Mammary epithelial cell (primary cell): ENCODE measurements at regions of chr10 and their contacts with region 1.

Region 1: GRCh38 chr10:61750929-61751471 is 88.3 kb downstream of the CABCOCO1 start:
- DNase-seq: peak; percentile 59
- H3K4me3 ChIP-seq: no peak overlapping the region
- H3K27ac ChIP-seq: no peak overlapping the region
- H3K4me1 ChIP-seq: peaks cover 29% of the 10 kb centered on the region
- H3K27me3 ChIP-seq: no peaks in the 10 kb centered on the region
- CTCF ChIP-seq: peak; percentile 90 to 95

Region 2: DNA sequence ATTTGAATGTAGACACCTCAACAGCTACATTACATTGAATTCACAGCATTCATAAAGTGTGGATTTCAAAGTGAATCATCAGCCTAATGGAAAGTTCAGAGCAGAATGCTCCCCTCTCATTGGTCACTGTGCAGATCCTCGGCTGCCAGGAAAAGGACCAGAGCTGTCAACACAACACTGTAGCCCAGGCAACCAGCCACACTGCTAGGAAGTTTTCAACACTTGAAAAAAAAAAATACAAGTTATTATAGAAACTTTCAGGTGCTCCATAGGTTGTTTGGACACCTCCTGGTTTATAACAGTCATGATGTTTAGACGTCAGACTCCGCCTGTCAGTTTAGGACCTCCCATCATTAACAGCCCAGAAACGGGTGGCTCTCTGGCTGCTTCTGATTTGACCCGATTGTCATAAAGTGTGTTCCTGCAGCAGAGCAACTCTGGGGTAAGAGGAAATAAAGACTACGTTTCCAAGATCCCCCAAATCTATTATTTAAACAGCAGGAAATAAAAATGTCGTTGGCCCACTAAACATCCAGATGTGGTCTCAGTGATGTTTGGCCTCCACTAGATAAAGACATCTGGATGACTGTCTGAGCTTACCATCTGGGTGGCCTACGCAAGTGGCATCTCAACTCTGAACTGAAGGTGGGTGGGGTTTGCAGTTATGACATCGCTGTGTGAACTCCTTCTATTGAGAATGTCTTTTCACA is 29.1 kb after region 1 on chr10:
- CTCF ChIA-PET with region 1: no interaction called
- dilution Hi-C with region 1: no loop called
- in situ Hi-C with region 1: no loop called
- intact Hi-C with region 1: no loop called
- DNase-seq: peak; percentile 81
- H3K4me3 ChIP-seq: no peak overlapping the region
- H3K27ac ChIP-seq: no peak overlapping the region
- H3K4me1 ChIP-seq: peaks cover 13% of the 10 kb centered on the region
- H3K27me3 ChIP-seq: no peaks in the 10 kb centered on the region
- CTCF ChIP-seq: no peak

Region 3: DNA sequence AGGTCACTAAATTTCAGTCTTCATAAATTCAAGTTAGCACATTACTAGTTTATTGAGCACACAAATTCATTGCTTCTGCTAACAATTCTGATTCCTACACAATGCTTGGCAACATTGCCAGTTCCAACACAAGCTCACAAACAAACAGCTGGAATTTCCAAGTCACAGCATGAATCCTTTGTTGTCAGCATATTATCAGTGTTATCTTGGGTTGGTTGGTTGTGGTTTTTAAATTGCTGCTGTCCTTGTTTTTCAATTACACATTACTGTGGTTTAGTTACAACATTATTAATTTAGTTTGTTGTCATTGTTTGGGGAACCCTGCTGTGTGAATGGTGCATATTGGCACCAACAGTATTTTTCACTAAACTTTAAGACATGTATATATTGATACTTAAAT is 64.5 kb after region 1 on chr10:
- CTCF ChIA-PET with region 1: interaction called, 4 read pairs
- dilution Hi-C with region 1: no loop called
- in situ Hi-C with region 1: no loop called
- intact Hi-C with region 1: loop called (anchors 5 kb)
- DNase-seq: peak; percentile 56
- H3K4me3 ChIP-seq: no peak overlapping the region
- H3K27ac ChIP-seq: no peak overlapping the region
- H3K4me1 ChIP-seq: peaks cover under 1% of the 10 kb centered on the region
- H3K27me3 ChIP-seq: no peaks in the 10 kb centered on the region
- CTCF ChIP-seq: no peak

Region 4: DNA sequence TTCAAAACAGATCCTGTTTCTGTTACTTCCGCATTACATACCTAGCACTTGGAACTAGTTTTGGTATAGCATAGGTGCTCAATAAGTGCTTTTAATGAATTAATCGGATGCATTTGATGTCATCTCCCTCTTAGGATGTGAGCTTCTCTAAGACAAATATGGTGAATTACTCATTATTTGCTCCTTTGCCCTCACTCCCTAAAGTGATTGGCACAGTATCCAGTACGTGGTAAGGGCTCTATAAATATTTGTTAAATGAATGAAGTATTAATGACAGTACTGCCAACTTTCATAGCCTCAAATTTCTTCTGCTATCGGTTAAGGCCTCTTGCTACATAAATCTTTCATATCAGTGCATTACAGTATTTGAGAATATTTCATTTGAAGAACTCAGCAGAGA is 74.6 kb after region 1 on chr10:
- CTCF ChIA-PET with region 1: interaction called, 11 read pairs
- dilution Hi-C with region 1: no loop called
- in situ Hi-C with region 1: no loop called
- intact Hi-C with region 1: no loop called
- DNase-seq: no peak
- H3K4me3 ChIP-seq: no peak overlapping the region
- H3K27ac ChIP-seq: no peak overlapping the region
- H3K4me1 ChIP-seq: peaks cover 14% of the 10 kb centered on the region
- H3K27me3 ChIP-seq: no peaks in the 10 kb centered on the region
- CTCF ChIP-seq: no peak

Region 5: GRCh38 chr10:61835069-61835945 is 84.3 kb after region 1 on chr10:
- CTCF ChIA-PET with region 1: interaction called, 10 read pairs
- dilution Hi-C with region 1: no loop called
- in situ Hi-C with region 1: no loop called
- intact Hi-C with region 1: loop called (anchors 1 kb)
- DNase-seq: peak; percentile 54
- H3K4me3 ChIP-seq: no peak overlapping the region
- H3K27ac ChIP-seq: peak overlapping the region; percentile 63
- H3K4me1 ChIP-seq: peaks cover 21% of the 10 kb centered on the region
- H3K27me3 ChIP-seq: no peaks in the 10 kb centered on the region
- CTCF ChIP-seq: peak; percentile 38 to 67

Region 6: GRCh38 chr10:61896854-61897661 is 146.1 kb after region 1 on chr10:
- CTCF ChIA-PET with region 1: interaction called, 3 read pairs
- dilution Hi-C with region 1: no loop called
- in situ Hi-C with region 1: no loop called
- intact Hi-C with region 1: loop called (anchors 1 kb)
- DNase-seq: no peak
- H3K4me3 ChIP-seq: peak overlapping the region in 1 of 3 experiments; percentile 15
- H3K27ac ChIP-seq: peak overlapping the region; percentile 30
- H3K4me1 ChIP-seq: peaks cover 34% of the 10 kb centered on the region
- H3K27me3 ChIP-seq: no peaks in the 10 kb centered on the region
- CTCF ChIP-seq: peak; percentile 71 to 75

Region 7: DNA sequence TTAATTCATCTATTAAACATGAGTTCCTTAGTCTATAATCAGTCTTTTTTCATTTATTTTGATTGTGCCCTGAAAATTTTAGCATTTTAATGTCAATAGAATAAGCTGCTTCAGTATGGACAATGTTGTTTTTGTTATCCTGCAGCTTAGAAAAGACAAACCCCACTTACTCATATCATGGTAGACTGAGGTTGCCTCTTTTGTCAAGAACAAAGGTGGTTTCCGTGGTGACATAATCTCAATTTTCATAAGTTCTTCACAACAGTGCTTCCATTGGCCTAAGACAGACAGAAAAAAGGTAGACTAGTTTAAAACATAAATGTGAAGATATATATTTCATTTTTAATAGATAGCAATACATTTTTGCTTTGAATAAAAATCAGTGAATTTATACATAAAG is 448.6 kb after region 1 on chr10:
- CTCF ChIA-PET with region 1: no interaction called
- dilution Hi-C with region 1: no loop called
- in situ Hi-C with region 1: no loop called
- intact Hi-C with region 1: no loop called
- DNase-seq: peak; percentile 29
- H3K4me3 ChIP-seq: no peak overlapping the region
- H3K27ac ChIP-seq: no peak overlapping the region
- H3K4me1 ChIP-seq: no peaks in the 10 kb centered on the region
- H3K27me3 ChIP-seq: no peaks in the 10 kb centered on the region
- CTCF ChIP-seq: no peak